ENCODE measurements at regions of chr22 and their contacts with region 1.

Region 1: DNA sequence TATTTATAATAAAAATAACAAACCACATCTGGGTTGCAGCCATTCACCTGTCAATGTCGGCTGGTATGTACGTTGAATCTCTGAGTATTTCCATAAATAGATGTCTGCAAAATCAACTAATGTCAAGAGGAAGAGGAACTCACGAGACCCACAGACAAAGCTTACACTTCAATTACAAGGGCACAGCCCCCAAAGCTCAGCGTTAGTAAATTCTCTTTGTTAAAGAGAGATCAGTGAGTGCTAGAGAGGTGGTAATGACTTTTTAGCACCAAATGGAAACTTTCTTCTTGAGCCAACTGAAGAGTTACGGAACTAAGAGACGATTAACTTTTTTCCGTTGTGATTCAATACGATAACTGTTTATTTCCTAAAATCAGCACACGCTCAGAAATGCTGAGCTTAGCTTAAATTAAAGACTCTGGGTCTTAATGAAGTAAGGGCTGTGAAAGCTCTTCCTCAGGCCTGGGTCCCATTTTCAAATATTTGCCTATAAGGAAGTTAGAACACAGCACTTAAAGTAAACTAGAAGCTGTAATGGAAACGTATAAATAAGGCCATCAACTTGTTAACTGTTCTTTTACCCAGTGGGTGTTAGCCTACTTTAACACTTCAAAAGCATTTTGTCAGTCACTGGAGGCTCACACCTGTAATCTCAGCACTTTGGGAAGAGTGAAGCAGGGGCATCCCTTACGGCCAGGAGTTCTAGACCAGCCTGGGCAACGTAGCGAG is 22.8 kb upstream of the TFIP11 start:
- DNase-seq: peak; percentile 69
- ATAC-seq: peak; percentile 64
- H3K4me3 ChIP-seq: peak overlapping the region; percentile 7 to 63 (median 30)
- H3K4me3 Mint-ChIP-seq: peak overlapping the region; percentile 73
- H3K27ac ChIP-seq: peak overlapping the region; percentile 81 to 90
- H3K27ac Mint-ChIP-seq: peak overlapping the region; percentile 94
- H3K4me1 ChIP-seq: peaks cover 32 to 44% of the 10 kb centered on the region in 2 donors
- H3K4me1 Mint-ChIP-seq: peaks cover 44% of the 10 kb centered on the region
- H3K27me3 ChIP-seq: no peaks in the 10 kb centered on the region
- H3K27me3 Mint-ChIP-seq: no peaks in the 10 kb centered on the region
- CTCF ChIP-seq: no peak

Region 2: GRCh38 chr22:26461188-26461810 is 73.7 kb before region 1 on chr22:
- CTCF ChIA-PET with region 1: no interaction called
- POLR2A ChIA-PET with region 1: no interaction called
- intact Hi-C with region 1: no loop called
- DNase-seq: peak; percentile 61
- ATAC-seq: no peak
- H3K4me3 ChIP-seq: no peak overlapping the region
- H3K4me3 Mint-ChIP-seq: no peak overlapping the region
- H3K27ac ChIP-seq: no peak overlapping the region
- H3K27ac Mint-ChIP-seq: no peak overlapping the region
- H3K4me1 ChIP-seq: no peaks in the 10 kb centered on the region
- H3K4me1 Mint-ChIP-seq: no peaks in the 10 kb centered on the region
- H3K27me3 ChIP-seq: no peaks in the 10 kb centered on the region
- H3K27me3 Mint-ChIP-seq: no peaks in the 10 kb centered on the region
- CTCF ChIP-seq: peak; percentile 81

Region 3: DNA sequence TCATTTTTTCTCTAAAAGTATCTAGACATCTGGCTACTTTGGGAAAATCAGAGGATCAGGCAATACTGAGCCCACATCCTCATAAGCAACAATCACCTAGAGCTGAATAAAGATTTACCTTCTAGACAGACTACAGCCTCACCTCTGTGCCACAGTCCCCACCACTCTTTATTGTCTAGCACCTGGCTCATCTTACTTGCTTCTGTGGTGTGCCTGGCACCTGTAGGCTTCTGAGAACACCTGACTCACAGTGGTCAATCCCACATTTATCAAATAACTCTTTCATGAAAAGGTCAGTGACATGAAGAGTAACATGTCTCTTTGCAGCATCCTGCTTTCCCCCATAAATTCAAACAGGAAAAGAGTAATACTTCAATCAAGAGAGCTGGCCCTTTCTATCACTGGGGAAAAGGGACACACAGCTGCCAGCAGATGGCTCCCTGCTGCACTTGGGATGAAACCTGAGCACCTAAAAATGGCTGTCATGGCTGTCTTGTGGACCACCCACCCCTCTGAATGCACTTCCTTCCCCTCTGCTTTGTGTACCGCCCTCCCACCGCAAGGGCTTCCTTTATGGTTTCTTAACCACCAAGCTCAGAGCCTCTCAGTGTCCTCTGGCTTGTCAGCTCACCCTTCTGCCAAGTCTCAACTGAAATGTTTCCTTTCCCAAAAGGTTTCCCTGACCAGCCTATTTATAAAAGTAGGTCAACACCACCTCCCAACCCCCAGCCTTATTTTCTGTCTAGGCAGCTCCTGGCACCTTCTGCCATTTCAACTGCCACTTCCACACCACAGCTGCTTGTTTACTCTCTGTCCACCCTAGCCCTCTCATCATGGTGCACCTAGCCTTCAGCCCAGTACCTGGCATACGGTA is 32.1 kb before region 1 on chr22:
- CTCF ChIA-PET with region 1: interaction called, 13 read pairs
- POLR2A ChIA-PET with region 1: no interaction called
- intact Hi-C with region 1: no loop called
- DNase-seq: peak; percentile 80
- ATAC-seq: peak; percentile 81
- H3K4me3 ChIP-seq: no peak overlapping the region
- H3K4me3 Mint-ChIP-seq: no peak overlapping the region
- H3K27ac ChIP-seq: peak overlapping the region in 1 of 2 donors; percentile 67
- H3K27ac Mint-ChIP-seq: peak overlapping the region; percentile 42
- H3K4me1 ChIP-seq: peaks cover 13 to 14% of the 10 kb centered on the region in 2 donors
- H3K4me1 Mint-ChIP-seq: peaks cover 17% of the 10 kb centered on the region
- H3K27me3 ChIP-seq: no peaks in the 10 kb centered on the region
- H3K27me3 Mint-ChIP-seq: no peaks in the 10 kb centered on the region
- CTCF ChIP-seq: peak; percentile 71

Region 4: DNA sequence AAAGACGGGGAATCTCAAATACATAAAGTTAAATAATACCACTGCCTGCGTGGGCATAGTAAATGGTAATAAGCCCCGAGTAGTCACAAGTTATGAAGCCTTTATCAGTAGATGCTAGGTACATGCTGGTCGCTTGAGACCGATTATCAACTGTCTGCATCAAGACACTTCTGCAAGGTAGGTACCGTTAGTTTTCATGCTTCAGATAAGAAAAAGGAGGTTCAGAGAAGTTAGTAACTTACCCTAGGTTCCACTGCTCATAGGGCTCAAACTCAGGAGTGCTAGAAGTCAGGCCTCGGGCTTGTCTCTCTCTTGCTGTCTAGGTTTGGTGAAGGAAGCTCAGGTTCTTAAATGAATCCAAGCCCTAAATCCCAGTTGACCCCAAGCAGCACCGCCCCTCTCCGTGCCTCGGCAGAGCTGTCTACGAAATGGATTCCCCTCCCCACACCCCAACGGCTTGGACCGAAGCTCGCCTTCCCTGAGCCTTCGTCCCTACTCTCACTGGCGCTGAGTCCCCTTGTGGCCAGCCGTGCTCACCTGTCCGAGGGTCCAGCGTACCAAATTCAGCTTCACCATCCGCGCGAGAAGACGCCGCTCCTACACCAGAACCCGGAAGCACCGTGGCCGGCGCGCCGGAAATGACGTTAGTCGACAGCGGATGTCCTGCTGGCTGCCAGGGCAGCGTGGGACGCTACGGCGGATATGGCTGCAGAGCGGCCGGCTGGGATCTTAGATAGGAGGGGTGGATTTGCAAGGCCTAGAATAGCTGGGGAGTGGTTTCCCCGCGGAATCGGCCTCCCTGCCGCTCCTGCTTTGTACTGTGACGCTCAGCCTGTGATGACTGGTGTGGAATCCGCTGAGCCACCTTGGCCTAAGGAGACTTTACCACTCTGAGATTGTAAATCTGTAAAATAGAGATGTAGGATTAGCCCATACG is 22.9 kb before region 1 on chr22 and contains the start of gene TFIP11:
- CTCF ChIA-PET with region 1: interaction called, 7 read pairs
- POLR2A ChIA-PET with region 1: interaction called, 6 read pairs
- intact Hi-C with region 1: loop called (anchors 1 kb)
- DNase-seq: peak; percentile 91
- ATAC-seq: peak; percentile 95
- H3K4me3 ChIP-seq: peak within 1 kb of the TSS; percentile 72 to 97 (median 81)
- H3K4me3 Mint-ChIP-seq: peak within 1 kb of the TSS; percentile 100
- H3K27ac ChIP-seq: peak within 1 kb of the TSS; percentile 62 to 94
- H3K27ac Mint-ChIP-seq: peak within 1 kb of the TSS; percentile 96
- H3K4me1 ChIP-seq: peaks cover 17 to 21% of the 10 kb centered on the region in 2 donors
- H3K4me1 Mint-ChIP-seq: peaks cover 41% of the 10 kb centered on the region
- H3K27me3 ChIP-seq: no peaks in the 10 kb centered on the region
- H3K27me3 Mint-ChIP-seq: no peaks in the 10 kb centered on the region
- CTCF ChIP-seq: no peak
- total RNA-seq, gene TFIP11: 82.8 and 83.4 TPM in 2 replicates

Region 5: DNA sequence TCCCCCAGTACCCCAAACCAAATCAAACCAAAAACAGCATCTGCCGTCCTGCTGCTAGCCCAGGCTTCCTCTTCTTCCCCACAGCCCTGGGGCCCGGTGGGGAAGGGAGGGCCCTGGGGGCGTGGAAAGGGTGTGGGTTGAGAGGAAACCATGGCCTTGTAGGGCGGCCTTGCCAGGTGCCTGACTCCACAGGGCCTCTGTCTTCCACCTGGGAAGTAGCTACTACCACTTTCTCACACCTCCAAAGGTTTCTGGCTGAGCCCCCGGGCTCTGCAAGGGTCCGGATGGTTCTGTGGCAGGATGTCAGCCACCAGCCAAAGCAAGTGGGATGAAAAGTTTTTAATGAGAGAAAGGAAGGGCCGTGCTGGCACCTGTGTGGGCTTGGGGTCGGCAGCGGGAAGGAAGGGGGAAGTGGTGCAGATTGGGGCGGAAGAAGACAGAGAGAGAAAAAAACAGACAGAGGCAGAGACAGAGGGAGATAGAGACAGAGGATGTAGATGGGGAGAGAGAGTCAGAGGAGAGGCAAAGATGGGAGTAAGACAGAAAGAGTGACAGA is 44.4 kb after region 1 on chr22:
- CTCF ChIA-PET with region 1: no interaction called
- POLR2A ChIA-PET with region 1: no interaction called
- intact Hi-C with region 1: loop called (anchors 5 kb)
- DNase-seq: peak; percentile 74
- ATAC-seq: peak; percentile 96
- H3K4me3 ChIP-seq: peak overlapping the region in 4 of 5 experiments; percentile 11 to 53 (median 42)
- H3K4me3 Mint-ChIP-seq: peak overlapping the region; percentile 89
- H3K27ac ChIP-seq: peak overlapping the region; percentile 50 to 83
- H3K27ac Mint-ChIP-seq: peak overlapping the region; percentile 98
- H3K4me1 ChIP-seq: peaks cover 20 to 28% of the 10 kb centered on the region in 2 donors
- H3K4me1 Mint-ChIP-seq: peaks cover 44% of the 10 kb centered on the region
- H3K27me3 ChIP-seq: no peaks in the 10 kb centered on the region
- H3K27me3 Mint-ChIP-seq: no peaks in the 10 kb centered on the region
- CTCF ChIP-seq: no peak

Region 6: GRCh38 chr22:26606611-26607010 is 71.6 kb after region 1 on chr22:
- CTCF ChIA-PET with region 1: no interaction called
- POLR2A ChIA-PET with region 1: interaction called, 10 read pairs
- intact Hi-C with region 1: no loop called
- DNase-seq: no peak
- ATAC-seq: no peak
- H3K4me3 ChIP-seq: no peak overlapping the region
- H3K4me3 Mint-ChIP-seq: no peak overlapping the region
- H3K27ac ChIP-seq: no peak overlapping the region
- H3K27ac Mint-ChIP-seq: no peak overlapping the region
- H3K4me1 ChIP-seq: peaks cover 7 to 14% of the 10 kb centered on the region in 2 donors
- H3K4me1 Mint-ChIP-seq: peaks cover 17% of the 10 kb centered on the region
- H3K27me3 ChIP-seq: peaks cover 0 to 3% (median 0%) of the 10 kb centered on the region in 4 experiments
- H3K27me3 Mint-ChIP-seq: no peaks in the 10 kb centered on the region
- CTCF ChIP-seq: no peak

Measured in B cell (primary cell).